ENCODE measurements at regions of chr11 and their contacts with region 1.

Region 1: DNA sequence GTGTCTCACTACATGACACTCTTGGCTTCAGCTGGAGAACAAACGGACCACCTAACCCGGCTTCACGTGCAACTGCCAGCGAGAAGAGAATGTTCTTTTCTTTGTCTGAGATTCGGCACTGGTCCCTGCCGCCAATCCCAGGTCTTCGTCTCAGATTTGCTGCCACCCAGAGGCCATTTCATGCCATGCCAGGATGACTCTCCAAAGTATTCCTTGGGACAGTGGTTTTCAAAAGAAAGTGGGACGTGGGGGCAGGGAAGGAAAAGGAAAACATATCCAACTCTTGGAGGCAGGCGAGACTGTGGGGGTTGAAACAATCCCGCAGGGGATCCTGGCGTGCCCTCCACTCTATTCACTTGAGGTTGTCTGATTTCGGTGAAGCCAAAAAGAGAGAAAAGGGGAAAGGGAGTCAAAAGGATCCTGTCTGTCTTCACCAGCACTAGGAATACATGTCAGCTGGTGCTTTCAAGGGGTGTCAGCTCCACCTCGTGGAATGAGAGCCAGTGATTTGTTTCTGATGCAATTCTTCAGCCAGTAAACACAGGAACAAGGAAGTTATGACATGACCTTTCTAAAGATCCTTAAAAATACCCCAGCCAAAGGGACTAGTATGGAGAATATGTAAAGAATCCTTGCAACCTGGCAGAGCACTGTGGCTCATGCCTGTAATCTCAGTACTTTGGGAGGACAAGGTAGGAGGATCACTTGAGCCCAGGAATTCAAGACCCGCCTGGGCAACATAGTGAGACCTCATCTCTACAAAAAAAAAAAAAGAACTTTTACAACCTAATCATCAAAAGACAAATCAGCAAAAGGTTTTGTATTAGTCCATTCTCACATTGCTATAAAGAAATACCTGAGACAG is 41.0 kb upstream of the APLNR start:
- DNase-seq: peak; percentile 92
- H3K4me3 ChIP-seq: peak overlapping the region in 1 of 3 experiments; percentile 25
- H3K27ac ChIP-seq: peak overlapping the region; percentile 65
- H3K4me1 ChIP-seq: peaks cover 32% of the 10 kb centered on the region
- H3K27me3 ChIP-seq: no peaks in the 10 kb centered on the region
- CTCF ChIP-seq: peak; percentile 83 to 96
- POLR2A ChIP-seq: no peak

Region 2: DNA sequence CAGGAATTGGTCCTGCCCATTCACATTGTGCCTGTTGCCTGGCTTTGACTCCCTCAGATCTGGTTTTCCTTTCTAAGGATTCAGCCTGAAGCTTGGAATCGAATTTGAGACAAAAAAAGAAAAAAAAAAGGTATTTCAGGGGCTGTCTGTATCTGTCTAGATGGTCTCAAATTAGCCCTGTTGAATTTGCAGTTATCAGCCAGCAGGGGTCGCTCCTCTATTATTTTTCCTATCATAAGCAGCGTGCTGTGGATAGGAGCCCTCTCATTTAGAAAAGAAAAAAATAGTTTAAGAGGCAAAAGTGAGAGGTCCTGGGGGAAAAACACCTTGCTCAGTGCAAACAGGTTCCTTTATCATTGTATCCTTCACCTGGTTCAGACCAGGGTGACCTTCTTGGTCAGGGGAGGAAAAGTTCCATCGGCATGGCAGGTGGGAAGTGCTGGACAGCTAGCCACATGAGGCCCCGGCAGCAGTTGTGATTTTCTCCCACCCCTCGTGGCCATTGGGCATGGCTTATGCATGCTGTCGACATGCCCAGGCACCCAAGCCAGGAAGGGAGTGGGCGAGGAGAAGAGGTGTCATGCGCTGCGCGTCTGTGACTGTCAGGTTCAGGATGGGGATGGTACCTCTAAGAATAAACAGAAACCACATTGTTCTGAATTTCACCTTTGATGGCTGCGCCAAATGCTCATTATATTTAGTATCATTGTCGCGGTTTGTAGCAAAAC is 276.2 kb before region 1 on chr11:
- CTCF ChIA-PET with region 1: no interaction called
- POLR2A ChIA-PET with region 1: no interaction called
- dilution Hi-C with region 1: no loop called
- intact Hi-C with region 1: loop called (anchors 1 kb)
- DNase-seq: peak; percentile 2
- H3K4me3 ChIP-seq: no peak overlapping the region
- H3K27ac ChIP-seq: no peak overlapping the region
- H3K4me1 ChIP-seq: no peaks in the 10 kb centered on the region
- H3K27me3 ChIP-seq: no peaks in the 10 kb centered on the region
- CTCF ChIP-seq: peak; percentile 17 to 45
- POLR2A ChIP-seq: no peak

Region 3: GRCh38 chr11:57116654-57117053 is 161.4 kb before region 1 on chr11:
- CTCF ChIA-PET with region 1: interaction called, 14 read pairs
- POLR2A ChIA-PET with region 1: no interaction called
- dilution Hi-C with region 1: no loop called
- intact Hi-C with region 1: loop called (anchors 1 kb)
- DNase-seq: peak; percentile 57
- H3K4me3 ChIP-seq: no peak overlapping the region
- H3K27ac ChIP-seq: no peak overlapping the region
- H3K4me1 ChIP-seq: no peaks in the 10 kb centered on the region
- H3K27me3 ChIP-seq: peaks cover 0 to 1% of the 10 kb centered on the region in 2 experiments
- CTCF ChIP-seq: peak; percentile 44 to 62
- POLR2A ChIP-seq: no peak

Region 4: GRCh38 chr11:57180081-57180561 is 98.0 kb before region 1 on chr11:
- CTCF ChIA-PET with region 1: no interaction called
- POLR2A ChIA-PET with region 1: no interaction called
- dilution Hi-C with region 1: no loop called
- intact Hi-C with region 1: no loop called
- DNase-seq: no peak
- H3K4me3 ChIP-seq: no peak overlapping the region
- H3K27ac ChIP-seq: no peak overlapping the region
- H3K4me1 ChIP-seq: no peaks in the 10 kb centered on the region
- H3K27me3 ChIP-seq: no peaks in the 10 kb centered on the region
- CTCF ChIP-seq: no peak
- POLR2A ChIP-seq: no peak

Region 5: GRCh38 chr11:57311109-57311936 is 33.2 kb after region 1 on chr11:
- CTCF ChIA-PET with region 1: interaction called, 4 read pairs
- POLR2A ChIA-PET with region 1: no interaction called
- dilution Hi-C with region 1: no loop called
- intact Hi-C with region 1: loop called (anchors 1 kb)
- DNase-seq: peak; percentile 96
- H3K4me3 ChIP-seq: peak overlapping the region; percentile 0 to 56 (median 24)
- H3K27ac ChIP-seq: peak overlapping the region; percentile 53
- H3K4me1 ChIP-seq: peaks cover 18% of the 10 kb centered on the region
- H3K27me3 ChIP-seq: no peaks in the 10 kb centered on the region
- CTCF ChIP-seq: no peak
- POLR2A ChIP-seq: peak; percentile 81

Measured in endothelial cell of umbilical vein (primary cell).